MCF 10A (cell line): ENCODE measurements at regions of chr7 and their contacts with region 1.

Region 1: GRCh38 chr7:107201795-107202450 is 33.1 kb downstream of the HBP1 start:
- DNase-seq: peak; percentile 50
- H3K4me3 Mint-ChIP-seq: no peak overlapping the region
- H3K27ac Mint-ChIP-seq: no peak overlapping the region
- H3K4me1 Mint-ChIP-seq: no peaks in the 10 kb centered on the region
- H3K27me3 Mint-ChIP-seq: no peaks in the 10 kb centered on the region
- CTCF ChIP-seq: peak; percentile 55

Region 2: GRCh38 chr7:107277331-107277730 is 75.4 kb after region 1 on chr7:
- CTCF ChIA-PET with region 1: no interaction called
- POLR2A ChIA-PET with region 1: no interaction called
- intact Hi-C with region 1: no loop called
- DNase-seq: peak; percentile 20
- H3K4me3 Mint-ChIP-seq: no peak overlapping the region
- H3K27ac Mint-ChIP-seq: no peak overlapping the region
- H3K4me1 Mint-ChIP-seq: no peaks in the 10 kb centered on the region
- H3K27me3 Mint-ChIP-seq: no peaks in the 10 kb centered on the region
- CTCF ChIP-seq: no peak

Region 3: DNA sequence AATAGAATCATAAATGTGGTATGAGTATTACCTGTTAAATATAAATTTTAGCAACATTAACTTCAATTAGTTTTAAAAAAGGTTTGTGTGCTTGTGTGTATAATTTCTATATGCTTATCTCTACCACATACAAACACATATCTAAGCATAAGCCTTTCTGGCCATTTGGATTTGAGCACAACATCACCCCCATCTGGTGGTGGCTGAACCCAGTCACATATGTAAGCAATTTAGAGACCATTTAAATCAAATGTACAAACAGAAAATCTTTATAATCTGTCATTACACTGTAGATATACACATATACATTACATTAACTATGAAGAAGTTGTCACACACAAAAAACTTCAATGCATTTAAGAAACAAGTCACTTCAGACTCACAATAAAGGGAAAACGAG is 299.7 kb after region 1 on chr7:
- CTCF ChIA-PET with region 1: no interaction called
- POLR2A ChIA-PET with region 1: no interaction called
- intact Hi-C with region 1: loop called (anchors 1 kb)
- DNase-seq: peak; percentile 43
- H3K4me3 Mint-ChIP-seq: no peak overlapping the region
- H3K27ac Mint-ChIP-seq: no peak overlapping the region
- H3K4me1 Mint-ChIP-seq: peaks cover 10% of the 10 kb centered on the region
- H3K27me3 Mint-ChIP-seq: no peaks in the 10 kb centered on the region
- CTCF ChIP-seq: peak; percentile 43